HEK293 (cell line): ENCODE measurements at regions of chr6 and their contacts with region 1.

Region 1: DNA sequence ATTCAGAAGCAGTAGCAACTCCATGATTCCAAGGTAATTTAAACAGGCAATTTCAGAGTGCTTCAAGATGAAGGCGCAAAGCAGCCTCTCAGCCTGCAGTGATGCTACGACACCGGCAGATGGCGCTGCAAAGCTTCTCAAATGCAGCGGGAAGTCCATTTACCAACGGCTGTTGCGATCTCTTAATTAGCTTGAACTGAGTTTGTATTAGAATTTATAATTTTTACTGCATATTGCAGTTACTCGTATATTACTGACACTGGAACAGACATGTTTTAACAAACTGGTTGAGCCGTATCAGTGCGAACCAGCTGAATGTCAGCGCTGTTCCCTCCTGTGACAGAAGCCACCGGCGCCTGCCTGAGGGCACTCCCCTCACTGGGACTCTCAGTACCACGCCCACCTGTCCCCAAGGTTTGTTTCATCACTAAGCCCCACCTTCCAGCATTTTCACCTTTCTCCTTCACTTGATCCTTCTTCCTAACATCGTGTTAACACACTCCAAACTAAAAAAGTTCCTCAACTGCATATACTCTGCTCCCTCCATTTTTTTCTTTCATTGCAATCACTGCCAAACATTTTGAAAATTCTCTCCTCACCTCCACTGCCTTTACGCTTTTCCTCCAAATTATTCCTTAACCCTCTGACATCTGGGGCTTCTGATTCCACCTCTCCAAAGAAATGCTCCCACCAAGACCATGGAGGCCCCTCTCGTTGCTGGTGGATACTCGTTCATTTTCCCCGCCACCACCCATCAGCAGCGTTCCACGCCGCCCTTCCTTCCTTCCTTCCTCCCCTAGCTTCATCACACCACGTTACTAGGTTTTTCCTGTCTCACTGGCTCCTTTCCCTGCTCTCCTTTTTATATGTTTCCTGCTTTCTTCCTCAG is 14.5 kb downstream of the GNL1 start:
- H3K4me3 ChIP-seq: peak overlapping the region; percentile 34
- H3K27ac ChIP-seq: no peak overlapping the region
- H3K4me1 ChIP-seq: no peaks in the 10 kb centered on the region
- CTCF ChIP-seq: peak; percentile 79

Region 2: DNA sequence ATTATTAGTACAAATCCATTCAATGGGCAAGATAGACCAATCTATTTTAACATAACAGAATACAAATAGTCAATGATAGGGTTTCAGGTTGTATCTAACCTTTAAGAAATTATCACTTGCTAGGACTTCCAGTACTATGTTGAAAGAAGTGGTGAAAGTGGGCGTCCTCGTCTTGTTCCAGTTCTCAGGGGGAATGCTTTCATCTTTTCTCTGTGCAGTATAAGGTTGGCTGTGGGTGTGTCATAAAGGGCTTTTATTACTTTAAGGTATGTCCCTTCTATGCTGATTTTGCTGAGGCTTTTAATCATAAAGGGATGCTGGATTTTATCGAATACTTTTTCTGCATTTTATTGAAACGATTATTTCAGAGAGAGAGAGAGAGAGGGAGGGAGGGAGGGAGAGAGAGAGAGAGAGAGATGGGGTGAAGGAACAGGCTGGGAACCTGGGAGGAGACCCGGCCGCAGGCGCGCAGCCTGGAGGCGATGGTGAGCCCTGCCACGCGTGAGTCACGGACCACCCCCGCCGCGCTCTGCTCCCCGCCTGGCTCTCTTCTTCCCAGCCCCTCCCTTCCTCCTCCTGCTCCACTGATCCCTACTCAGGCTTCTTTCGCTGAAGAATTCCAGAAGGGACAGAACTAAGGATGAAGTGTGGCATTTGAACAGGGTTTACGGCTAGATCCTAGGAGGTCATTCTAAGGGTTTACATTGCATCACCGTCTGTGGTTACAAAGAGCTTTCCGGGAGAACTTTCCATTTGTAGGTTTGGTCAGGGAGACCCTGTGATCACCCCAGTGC is 97.9 kb before region 1 on chr6:
- CTCF ChIA-PET with region 1: no interaction called
- POLR2A ChIA-PET with region 1: no interaction called
- H3K4me3 ChIP-seq: no peak overlapping the region
- H3K27ac ChIP-seq: no peak overlapping the region
- H3K4me1 ChIP-seq: 0 out of 2 replicates have a peak, but pooled peaks cover 3% of the 10 kb centered on the region
- CTCF ChIP-seq: no peak

Region 3: GRCh38 chr6:30483677-30484279 is 58.0 kb before region 1 on chr6:
- CTCF ChIA-PET with region 1: interaction called, 324 read pairs
- POLR2A ChIA-PET with region 1: interaction called, 6 read pairs
- H3K4me3 ChIP-seq: no peak overlapping the region
- H3K27ac ChIP-seq: no peak overlapping the region
- H3K4me1 ChIP-seq: no peaks in the 10 kb centered on the region
- CTCF ChIP-seq: peak; percentile 33; the same call in 1 of the 2 replicates

Region 4: DNA sequence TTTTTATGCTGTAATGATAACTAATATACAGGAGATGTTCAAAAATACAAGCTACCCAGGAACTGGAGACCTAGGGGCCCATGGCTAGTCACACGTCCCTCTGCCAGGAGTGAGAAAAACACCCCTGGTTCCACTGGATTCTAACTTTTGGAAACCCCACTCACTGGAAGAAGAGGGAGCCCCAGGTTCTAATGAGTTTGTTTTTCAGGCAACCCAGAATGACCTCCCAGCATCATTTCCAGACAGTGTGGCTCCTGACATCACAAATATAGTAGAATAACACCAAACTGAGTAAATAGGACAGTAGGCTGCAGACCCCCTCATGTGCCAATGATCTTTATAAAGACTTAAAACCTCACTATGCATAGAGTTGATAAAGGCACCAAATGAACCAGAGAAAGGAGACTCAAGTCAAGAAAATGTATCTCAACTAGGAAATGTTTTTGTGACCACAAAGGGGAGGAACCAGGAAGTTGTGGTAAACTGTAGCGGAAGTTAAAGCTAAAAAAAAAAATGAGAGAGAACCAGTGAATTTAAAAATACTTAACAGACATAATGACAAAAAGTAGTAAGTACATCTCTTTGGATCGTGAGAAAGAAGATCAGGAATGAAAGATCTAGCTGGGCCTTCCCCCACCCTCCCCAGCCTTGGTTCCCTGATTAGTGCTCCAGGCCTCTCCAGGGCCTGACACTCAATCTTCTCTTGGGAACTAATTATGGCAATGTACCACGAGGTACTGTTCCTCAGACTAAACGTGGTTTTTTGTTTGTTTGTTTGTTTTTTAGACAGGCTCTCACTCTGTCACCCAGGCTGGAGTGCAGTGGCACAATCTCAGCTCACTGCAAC is 32.6 kb before region 1 on chr6:
- CTCF ChIA-PET with region 1: interaction called, 46 read pairs
- POLR2A ChIA-PET with region 1: no interaction called
- H3K4me3 ChIP-seq: no peak overlapping the region
- H3K27ac ChIP-seq: no peak overlapping the region
- H3K4me1 ChIP-seq: no peaks in the 10 kb centered on the region
- CTCF ChIP-seq: no peak

Region 5: GRCh38 chr6:30565772-30566171 is 24.0 kb after region 1 on chr6:
- CTCF ChIA-PET with region 1: interaction called, 29 read pairs
- POLR2A ChIA-PET with region 1: interaction called, 5 read pairs
- H3K4me3 ChIP-seq: no peak overlapping the region
- H3K27ac ChIP-seq: no peak overlapping the region
- H3K4me1 ChIP-seq: peaks cover 2% of the 10 kb centered on the region; the same call in 1 of the 2 replicates
- CTCF ChIP-seq: no peak

Region 6: DNA sequence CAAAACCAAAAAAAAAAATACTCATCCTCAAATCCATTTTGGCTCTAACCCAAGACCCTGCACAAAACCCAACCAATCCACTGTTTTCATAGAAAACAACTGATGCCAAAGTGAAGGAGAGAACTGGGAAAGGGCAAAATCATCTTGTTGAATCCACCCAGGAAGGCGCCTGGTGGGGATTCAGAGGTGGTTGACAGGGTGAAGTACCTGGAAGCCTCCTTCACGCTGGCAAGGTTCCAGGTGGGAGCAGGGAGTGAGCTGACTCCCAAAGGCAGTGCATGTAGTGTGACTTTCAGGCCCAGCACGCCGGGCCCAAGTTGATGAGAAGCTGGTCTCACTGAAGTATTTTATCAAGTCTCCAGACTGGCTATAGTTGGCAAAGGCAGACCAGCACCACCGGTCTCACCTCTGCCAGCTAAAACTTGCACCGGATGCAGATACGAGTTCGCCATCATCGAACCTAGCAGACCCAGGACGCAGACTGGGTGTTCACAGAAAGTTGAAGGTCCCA is 58.7 kb after region 1 on chr6:
- CTCF ChIA-PET with region 1: interaction called, 121 read pairs
- POLR2A ChIA-PET with region 1: interaction called, 8 read pairs
- H3K4me3 ChIP-seq: no peak overlapping the region
- H3K27ac ChIP-seq: peak overlapping the region; percentile 40; the same call in 1 of the 2 replicates
- H3K4me1 ChIP-seq: no peaks in the 10 kb centered on the region
- CTCF ChIP-seq: no peak

Region 7: DNA sequence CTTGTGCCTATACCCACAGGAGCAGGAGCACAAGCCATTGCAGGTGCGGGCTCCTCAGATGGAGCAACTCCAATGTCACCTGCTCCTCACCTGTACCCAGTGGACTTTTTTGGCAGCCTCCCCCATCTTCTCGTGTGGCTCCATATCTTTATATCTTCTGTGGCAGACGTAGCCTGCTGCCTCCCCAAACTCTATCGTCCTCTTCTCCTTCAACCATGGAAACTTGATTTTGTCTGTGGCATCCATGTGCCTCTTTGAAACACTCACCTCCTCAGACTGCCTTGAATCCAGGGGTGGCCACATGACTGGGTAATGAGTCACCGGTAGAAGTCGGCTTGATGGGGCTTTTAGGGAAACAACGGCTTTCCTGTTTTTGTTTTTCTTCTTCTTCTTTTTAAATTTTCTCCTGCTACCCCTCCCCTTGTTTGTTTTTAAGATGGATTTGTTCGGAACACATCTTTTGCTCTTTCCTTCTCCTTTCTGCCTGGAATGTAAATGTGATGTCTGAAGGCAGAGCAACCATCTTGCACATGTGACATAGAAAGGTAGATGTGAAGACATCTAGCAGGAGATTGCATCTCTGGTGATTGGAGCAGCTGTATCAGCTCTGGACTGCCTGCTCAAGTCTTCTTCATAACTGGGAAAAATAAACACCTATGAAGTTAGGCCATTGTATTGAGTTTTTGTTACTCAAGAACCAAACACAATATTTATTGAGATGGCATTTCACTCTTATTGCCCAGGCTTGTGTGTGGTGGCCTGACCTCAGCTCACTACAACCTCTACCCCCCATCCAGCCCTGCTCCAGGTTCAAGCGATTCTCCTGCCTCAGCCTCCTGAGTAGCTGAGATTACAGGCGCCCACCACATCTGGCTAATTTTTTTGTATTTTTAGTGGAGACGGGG is 272.6 kb after region 1 on chr6:
- CTCF ChIA-PET with region 1: no interaction called
- POLR2A ChIA-PET with region 1: no interaction called
- H3K4me3 ChIP-seq: no peak overlapping the region
- H3K27ac ChIP-seq: no peak overlapping the region; the same call in 1 of the 2 replicates
- H3K4me1 ChIP-seq: no peaks in the 10 kb centered on the region
- CTCF ChIP-seq: no peak